Naive thymus-derived CD4-positive, alpha-beta T cell (primary cell): ENCODE measurements at regions of chr11 and their contacts with region 1.

Region 1: DNA sequence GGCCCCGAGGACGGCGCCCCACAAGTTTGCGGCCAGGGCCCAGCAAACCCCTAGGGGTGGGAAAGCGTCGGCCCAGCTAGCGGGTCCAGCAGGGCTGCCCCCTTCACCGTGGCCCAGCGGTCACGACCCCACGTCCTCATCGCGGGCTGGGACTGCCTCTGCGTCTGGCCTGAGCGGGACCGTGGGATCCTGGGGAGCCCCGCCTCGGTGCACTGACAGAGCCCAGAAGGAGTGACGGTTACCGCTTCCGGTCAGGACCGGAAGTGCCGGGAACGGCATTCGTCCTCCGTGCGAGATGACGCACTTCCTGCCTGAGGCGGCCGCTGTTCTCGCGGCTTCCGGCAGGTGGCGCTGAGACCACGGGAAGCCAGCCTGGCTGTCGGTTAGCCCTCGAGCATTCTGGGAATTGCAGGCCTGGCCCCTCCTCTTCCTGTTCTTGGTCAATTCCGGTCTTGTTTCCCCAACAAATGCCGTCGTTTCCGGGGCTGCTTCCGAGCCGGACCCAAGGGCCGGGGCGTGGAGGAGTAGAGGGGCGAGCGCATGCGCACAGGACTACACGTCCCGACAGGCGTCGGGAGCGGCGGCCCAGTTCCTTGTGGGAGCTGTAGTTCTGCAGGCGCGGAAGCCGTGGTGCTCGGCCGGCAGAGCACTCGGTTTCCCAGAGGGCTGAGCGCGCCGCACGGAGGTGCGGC is at the start of gene TSSC4:
- DNase-seq: peak; percentile 99 to 100 (median 100)
- ATAC-seq: peak; percentile 90
- H3K4me3 ChIP-seq: peak within 1 kb of the TSS; percentile 96
- H3K4me3 Mint-ChIP-seq: peak within 1 kb of the TSS; percentile 87 to 97 (median 92)
- H3K27ac ChIP-seq: peak within 1 kb of the TSS; percentile 93
- H3K27ac Mint-ChIP-seq: peak within 1 kb of the TSS; percentile 90 to 97 (median 95)
- H3K4me1 ChIP-seq: peaks cover 19 to 22% of the 10 kb centered on the region in 2 donors
- H3K4me1 Mint-ChIP-seq: peaks cover 0 to 28% (median 16%) of the 10 kb centered on the region in 7 donors
- H3K27me3 ChIP-seq: no peaks in the 10 kb centered on the region
- H3K27me3 Mint-ChIP-seq: peaks cover 0 to 2% (median 0%) of the 10 kb centered on the region in 5 donors
- total RNA-seq, gene TSSC4: 43.6 to 55.0 (median 50.9) TPM

Region 2: GRCh38 chr11:1309498-1310317 is 1090.5 kb before region 1 on chr11 and contains the start of gene TOLLIP:
- CTCF ChIA-PET with region 1: interaction called, 3 read pairs
- POLR2A ChIA-PET with region 1: no interaction called
- intact Hi-C with region 1: loop called in 1 of 2 experiments (anchors 10 kb)
- DNase-seq: peak; percentile 94 to 100 (median 99)
- ATAC-seq: peak; percentile 86
- H3K4me3 ChIP-seq: peak within 1 kb of the TSS; percentile 76
- H3K4me3 Mint-ChIP-seq: peak within 1 kb of the TSS; percentile 80 to 92 (median 88)
- H3K27ac ChIP-seq: peak within 1 kb of the TSS; percentile 86
- H3K27ac Mint-ChIP-seq: peak within 1 kb of the TSS; percentile 87 to 97 (median 94)
- H3K4me1 ChIP-seq: peaks cover 31 to 35% of the 10 kb centered on the region in 2 donors
- H3K4me1 Mint-ChIP-seq: peaks cover 32 to 55% (median 43%) of the 10 kb centered on the region in 7 donors
- H3K27me3 ChIP-seq: no peaks in the 10 kb centered on the region
- H3K27me3 Mint-ChIP-seq: peaks cover 0 to 24% (median 0%) of the 10 kb centered on the region in 5 donors
- total RNA-seq, gene TOLLIP: 39.8 to 63.8 (median 48.7) TPM

Region 3: DNA sequence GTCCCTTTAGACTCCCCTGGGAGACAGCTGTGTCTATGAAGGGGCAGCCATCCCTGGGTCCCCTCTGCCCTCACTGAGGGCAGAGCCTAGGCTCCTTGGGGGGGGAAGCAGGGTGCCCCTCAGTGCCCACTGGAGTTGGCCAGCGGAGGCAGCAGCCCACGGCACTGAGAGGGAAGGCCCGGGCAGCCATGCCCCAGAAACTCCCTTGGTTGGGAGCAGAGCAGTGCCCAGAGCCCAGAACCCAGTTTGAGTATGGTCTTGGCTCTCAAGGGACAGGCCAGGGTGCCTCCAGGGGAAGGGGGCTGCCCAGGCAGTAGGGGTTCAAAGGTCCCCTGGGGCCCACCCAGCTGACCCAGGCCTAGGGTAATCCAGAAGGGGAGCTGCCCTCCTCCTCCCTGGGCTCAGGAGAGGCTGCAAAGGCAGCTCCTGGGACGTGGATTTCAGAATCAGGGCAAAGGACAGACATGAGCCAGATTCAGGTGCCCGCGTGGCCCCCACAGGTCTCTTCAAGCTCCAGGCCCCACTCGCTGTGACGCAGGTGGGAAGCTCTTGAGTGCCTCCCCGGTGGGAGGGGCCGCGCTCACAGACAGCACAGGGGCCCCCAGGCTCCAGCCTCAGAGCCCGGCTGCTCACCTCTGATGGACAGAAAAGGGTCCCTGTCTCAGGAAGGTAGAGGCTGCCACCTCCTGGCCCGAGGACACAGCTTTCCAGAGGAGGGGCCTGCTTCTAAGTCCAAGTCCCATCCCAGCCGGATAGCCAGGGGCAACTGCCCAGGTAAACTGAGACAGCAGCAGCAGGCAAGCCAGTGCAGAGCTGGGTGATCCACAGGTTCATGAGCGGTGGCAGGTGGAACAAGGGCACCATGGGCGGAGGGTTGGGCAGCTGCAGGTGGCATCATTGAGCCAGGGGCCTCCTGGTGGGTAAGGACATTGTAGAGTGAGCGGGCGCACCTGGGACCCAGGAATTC is 101.1 kb before region 1 on chr11:
- CTCF ChIA-PET with region 1: interaction called, 13 read pairs
- POLR2A ChIA-PET with region 1: interaction called, 27 read pairs
- intact Hi-C with region 1: loop called in 1 of 2 experiments (anchors 1 kb)
- DNase-seq: peak in 2 of 9 donors; percentile 30 to 32
- ATAC-seq: no peak
- H3K4me3 ChIP-seq: no peak overlapping the region
- H3K4me3 Mint-ChIP-seq: peak overlapping the region; percentile 52 to 98 (median 75)
- H3K27ac ChIP-seq: peak overlapping the region; percentile 58
- H3K27ac Mint-ChIP-seq: peak overlapping the region; percentile 63 to 91 (median 79)
- H3K4me1 ChIP-seq: peaks cover 30 to 44% of the 10 kb centered on the region in 2 donors
- H3K4me1 Mint-ChIP-seq: peaks cover 19 to 51% (median 38%) of the 10 kb centered on the region in 7 donors
- H3K27me3 ChIP-seq: no peaks in the 10 kb centered on the region
- H3K27me3 Mint-ChIP-seq: peaks cover 0 to 5% (median 0%) of the 10 kb centered on the region in 5 donors

Region 4: DNA sequence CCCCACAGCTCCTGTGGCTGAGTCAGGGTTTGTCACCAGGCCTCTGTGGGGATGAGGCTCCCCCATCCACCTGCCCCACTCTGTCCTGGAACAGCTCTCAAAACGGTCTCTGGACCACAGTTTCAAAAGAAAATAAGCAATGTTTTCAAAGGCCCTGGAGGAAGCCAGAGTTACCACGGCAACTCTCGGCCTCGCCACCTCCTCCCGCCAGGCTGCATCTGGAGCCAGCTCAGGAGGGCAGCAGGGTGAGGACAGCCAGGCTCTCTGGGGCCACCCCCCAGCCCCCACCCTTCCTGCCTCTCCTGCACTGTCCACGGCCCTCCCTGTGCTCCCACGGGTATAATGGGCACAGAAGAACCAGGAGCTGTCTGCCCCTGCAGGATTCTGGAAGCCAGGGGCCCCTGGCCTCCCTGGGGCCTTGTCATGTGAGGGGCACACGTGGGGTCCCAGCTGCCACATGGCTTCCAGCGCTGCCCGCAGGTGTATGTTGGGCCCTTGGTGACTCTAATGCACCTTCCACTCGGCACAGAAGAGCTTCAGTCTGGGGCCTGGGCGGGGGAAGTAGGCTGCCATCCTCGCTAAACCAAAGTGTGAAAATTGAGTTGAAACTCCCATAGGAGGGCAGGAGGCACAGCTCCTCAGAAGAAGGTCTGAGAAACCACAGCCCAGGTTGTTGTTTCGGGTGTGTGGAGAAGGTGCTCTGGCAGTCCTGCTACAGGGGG is 12.8 kb before region 1 on chr11:
- CTCF ChIA-PET with region 1: interaction called, 4 read pairs
- POLR2A ChIA-PET with region 1: interaction called, 10 read pairs
- intact Hi-C with region 1: no loop called
- DNase-seq: no peak
- ATAC-seq: peak; percentile 30
- H3K4me3 ChIP-seq: peak overlapping the region; percentile 17
- H3K4me3 Mint-ChIP-seq: peak overlapping the region in 2 of 10 donors; percentile 9 to 23
- H3K27ac ChIP-seq: peak overlapping the region; percentile 18
- H3K27ac Mint-ChIP-seq: peak overlapping the region in 7 of 9 donors; percentile 8 to 76 (median 60)
- H3K4me1 ChIP-seq: peaks cover 27 to 58% of the 10 kb centered on the region in 2 donors
- H3K4me1 Mint-ChIP-seq: peaks cover 26 to 67% (median 45%) of the 10 kb centered on the region in 7 donors
- H3K27me3 ChIP-seq: no peaks in the 10 kb centered on the region
- H3K27me3 Mint-ChIP-seq: no peaks in the 10 kb centered on the region

Region 5: DNA sequence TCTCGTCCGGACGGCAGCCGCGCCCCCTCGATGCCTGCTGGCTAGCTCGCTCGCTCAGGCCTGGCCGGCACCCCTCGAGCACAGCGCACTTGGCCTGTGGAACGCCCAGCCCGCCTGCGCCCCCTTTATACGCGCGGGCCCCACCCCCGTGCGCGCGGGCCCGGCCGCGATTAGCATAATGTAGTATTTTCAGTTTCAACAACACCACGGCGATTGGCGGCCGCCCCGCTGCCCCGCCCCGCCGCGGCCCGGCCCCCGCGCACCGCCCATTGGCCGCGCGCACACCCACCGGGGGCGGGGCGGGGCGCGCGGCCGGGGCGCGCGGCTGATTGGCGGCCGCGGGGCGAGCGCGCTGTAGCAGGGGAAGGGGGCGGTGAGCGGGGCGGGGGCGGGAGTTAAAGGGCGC is 485.5 kb after region 1 on chr11 and contains the start of gene CDKN1C:
- CTCF ChIA-PET with region 1: no interaction called
- POLR2A ChIA-PET with region 1: no interaction called
- intact Hi-C with region 1: loop called in 1 of 2 experiments (anchors 1 kb)
- DNase-seq: peak; percentile 82 to 87 (median 85)
- ATAC-seq: peak; percentile 95
- H3K4me3 ChIP-seq: peak within 1 kb of the TSS; percentile 75
- H3K4me3 Mint-ChIP-seq: peak within 1 kb of the TSS; percentile 85 to 96 (median 92)
- H3K27ac ChIP-seq: peak within 1 kb of the TSS; percentile 68
- H3K27ac Mint-ChIP-seq: peak within 1 kb of the TSS in 8 of 9 donors; percentile 26 to 93 (median 80)
- H3K4me1 ChIP-seq: peaks cover 5 to 7% of the 10 kb centered on the region in 2 donors
- H3K4me1 Mint-ChIP-seq: peaks cover 0 to 32% (median 22%) of the 10 kb centered on the region in 7 donors
- H3K27me3 ChIP-seq: no peaks in the 10 kb centered on the region
- H3K27me3 Mint-ChIP-seq: peaks cover 0 to 43% (median 0%) of the 10 kb centered on the region in 5 donors
- total RNA-seq, gene CDKN1C: 0.53 to 36.0 (median 6.0) TPM

Region 6: GRCh38 chr11:3057069-3057963 is 657.1 kb after region 1 on chr11 and contains the start of gene CARS1:
- CTCF ChIA-PET with region 1: no interaction called
- POLR2A ChIA-PET with region 1: no interaction called
- intact Hi-C with region 1: loop called (anchors 1 kb)
- DNase-seq: peak; percentile 82 to 93 (median 89)
- ATAC-seq: peak; percentile 99
- H3K4me3 ChIP-seq: peak within 1 kb of the TSS; percentile 85
- H3K4me3 Mint-ChIP-seq: peak within 1 kb of the TSS; percentile 86 to 95 (median 89)
- H3K27ac ChIP-seq: peak within 1 kb of the TSS; percentile 91
- H3K27ac Mint-ChIP-seq: peak within 1 kb of the TSS; percentile 44 to 89 (median 87)
- H3K4me1 ChIP-seq: peaks cover 14% of the 10 kb centered on the region in 2 donors
- H3K4me1 Mint-ChIP-seq: peaks cover 25 to 42% (median 39%) of the 10 kb centered on the region in 7 donors
- H3K27me3 ChIP-seq: no peaks in the 10 kb centered on the region
- H3K27me3 Mint-ChIP-seq: no peaks in the 10 kb centered on the region
- total RNA-seq, gene CARS1: 27.8 to 70.4 (median 53.7) TPM